CD4-positive, alpha-beta memory T cell (primary cell): ENCODE measurements at regions of chr3 and their contacts with region 1.

Region 1: DNA sequence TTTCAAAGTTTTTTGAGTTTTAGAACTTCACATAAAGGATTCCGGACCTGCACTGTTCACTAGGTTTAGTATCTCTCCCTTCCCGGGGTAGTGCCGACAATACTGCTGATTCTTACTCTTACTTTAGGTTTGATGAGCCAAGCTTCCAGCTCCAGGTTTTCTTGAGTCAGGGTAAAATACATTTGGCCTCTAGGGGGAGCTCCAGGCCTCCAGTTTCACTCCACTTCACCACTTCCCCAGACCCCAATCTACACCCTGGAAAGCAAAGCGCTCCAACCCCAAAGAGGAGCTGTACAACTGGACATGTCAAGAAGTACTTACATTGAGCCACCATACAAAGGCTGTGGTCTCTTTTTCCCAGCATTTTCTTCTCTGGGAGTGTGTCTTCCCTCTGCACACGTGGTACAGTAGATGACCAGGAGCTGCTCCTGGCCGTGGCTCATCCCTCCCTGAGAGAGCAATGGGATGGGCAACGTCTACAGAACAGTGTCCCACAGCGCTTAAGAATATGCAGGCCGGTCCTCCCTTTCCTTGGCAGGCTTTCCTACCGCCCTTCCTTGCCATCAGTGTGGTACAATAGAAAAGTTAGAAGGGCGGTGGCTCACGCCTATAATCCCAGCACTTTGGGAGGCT is 93.9 kb upstream of the CCDC80 start:
- DNase-seq: peak; percentile 63 to 72 (median 69)
- H3K4me3 ChIP-seq: no peak overlapping the region
- H3K4me3 Mint-ChIP-seq: peak overlapping the region in 2 of 8 donors; percentile 3 to 5
- H3K27ac ChIP-seq: no peak overlapping the region
- H3K27ac Mint-ChIP-seq: peak overlapping the region in 5 of 7 donors; percentile 5 to 58 (median 40)
- H3K4me1 ChIP-seq: peaks cover 56% of the 10 kb centered on the region
- H3K4me1 Mint-ChIP-seq: peaks cover 30 to 50% (median 42%) of the 10 kb centered on the region in 4 donors
- H3K27me3 ChIP-seq: no peaks in the 10 kb centered on the region
- H3K27me3 Mint-ChIP-seq: no peaks in the 10 kb centered on the region

Region 2: GRCh38 chr3:112746675-112747280 is 11.9 kb after region 1 on chr3:
- CTCF ChIA-PET with region 1: interaction called, 59 read pairs
- POLR2A ChIA-PET with region 1: interaction called, 10 read pairs
- intact Hi-C with region 1: no loop called
- DNase-seq: no peak
- H3K4me3 ChIP-seq: no peak overlapping the region
- H3K4me3 Mint-ChIP-seq: peak overlapping the region in 1 of 8 donors; percentile 61
- H3K27ac ChIP-seq: no peak overlapping the region
- H3K27ac Mint-ChIP-seq: no peak overlapping the region
- H3K4me1 ChIP-seq: peaks cover 55% of the 10 kb centered on the region
- H3K4me1 Mint-ChIP-seq: peaks cover 17 to 48% (median 28%) of the 10 kb centered on the region in 4 donors
- H3K27me3 ChIP-seq: no peaks in the 10 kb centered on the region
- H3K27me3 Mint-ChIP-seq: no peaks in the 10 kb centered on the region

Region 3: GRCh38 chr3:112773864-112774590 is 39.2 kb after region 1 on chr3:
- CTCF ChIA-PET with region 1: interaction called, 18 read pairs
- POLR2A ChIA-PET with region 1: interaction called, 26 read pairs
- intact Hi-C with region 1: loop called (anchors 2 kb)
- DNase-seq: peak; percentile 48 to 73 (median 62)
- H3K4me3 ChIP-seq: no peak overlapping the region
- H3K4me3 Mint-ChIP-seq: peak overlapping the region; percentile 51 to 79 (median 69)
- H3K27ac ChIP-seq: peak overlapping the region; percentile 18
- H3K27ac Mint-ChIP-seq: peak overlapping the region; percentile 73 to 89 (median 85)
- H3K4me1 ChIP-seq: peaks cover 68% of the 10 kb centered on the region
- H3K4me1 Mint-ChIP-seq: peaks cover 45 to 82% (median 61%) of the 10 kb centered on the region in 4 donors
- H3K27me3 ChIP-seq: no peaks in the 10 kb centered on the region
- H3K27me3 Mint-ChIP-seq: no peaks in the 10 kb centered on the region

Region 4: DNA sequence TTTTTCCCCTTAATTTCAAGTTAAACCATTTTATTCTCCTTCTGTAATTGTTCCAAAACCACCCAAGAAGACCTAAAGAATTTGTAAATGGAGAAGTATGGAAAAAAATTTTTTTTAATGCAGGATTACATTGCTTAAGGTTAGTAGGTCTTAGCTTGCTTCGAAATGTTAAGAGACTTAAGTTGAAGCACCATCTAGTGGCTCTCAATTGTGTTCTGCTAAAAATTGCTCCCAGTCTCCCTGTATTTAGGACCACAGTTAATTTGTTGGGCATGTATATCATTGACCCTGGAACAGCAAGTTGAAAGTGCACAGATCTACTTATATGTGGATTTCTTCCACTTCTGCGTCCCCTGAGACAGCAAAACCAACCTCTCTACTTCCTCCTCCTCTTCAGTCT is 79.4 kb after region 1 on chr3:
- CTCF ChIA-PET with region 1: interaction called, 180 read pairs
- POLR2A ChIA-PET with region 1: interaction called, 13 read pairs
- intact Hi-C with region 1: loop called (anchors 1 kb)
- DNase-seq: peak in 2 of 5 donors; percentile 9 to 13
- H3K4me3 ChIP-seq: no peak overlapping the region
- H3K4me3 Mint-ChIP-seq: peak overlapping the region in 1 of 8 donors; percentile 61
- H3K27ac ChIP-seq: no peak overlapping the region
- H3K27ac Mint-ChIP-seq: peak overlapping the region in 1 of 7 donors; percentile 68
- H3K4me1 ChIP-seq: peaks cover 27% of the 10 kb centered on the region
- H3K4me1 Mint-ChIP-seq: peaks cover 18 to 44% (median 32%) of the 10 kb centered on the region in 4 donors
- H3K27me3 ChIP-seq: no peaks in the 10 kb centered on the region
- H3K27me3 Mint-ChIP-seq: no peaks in the 10 kb centered on the region

Region 5: DNA sequence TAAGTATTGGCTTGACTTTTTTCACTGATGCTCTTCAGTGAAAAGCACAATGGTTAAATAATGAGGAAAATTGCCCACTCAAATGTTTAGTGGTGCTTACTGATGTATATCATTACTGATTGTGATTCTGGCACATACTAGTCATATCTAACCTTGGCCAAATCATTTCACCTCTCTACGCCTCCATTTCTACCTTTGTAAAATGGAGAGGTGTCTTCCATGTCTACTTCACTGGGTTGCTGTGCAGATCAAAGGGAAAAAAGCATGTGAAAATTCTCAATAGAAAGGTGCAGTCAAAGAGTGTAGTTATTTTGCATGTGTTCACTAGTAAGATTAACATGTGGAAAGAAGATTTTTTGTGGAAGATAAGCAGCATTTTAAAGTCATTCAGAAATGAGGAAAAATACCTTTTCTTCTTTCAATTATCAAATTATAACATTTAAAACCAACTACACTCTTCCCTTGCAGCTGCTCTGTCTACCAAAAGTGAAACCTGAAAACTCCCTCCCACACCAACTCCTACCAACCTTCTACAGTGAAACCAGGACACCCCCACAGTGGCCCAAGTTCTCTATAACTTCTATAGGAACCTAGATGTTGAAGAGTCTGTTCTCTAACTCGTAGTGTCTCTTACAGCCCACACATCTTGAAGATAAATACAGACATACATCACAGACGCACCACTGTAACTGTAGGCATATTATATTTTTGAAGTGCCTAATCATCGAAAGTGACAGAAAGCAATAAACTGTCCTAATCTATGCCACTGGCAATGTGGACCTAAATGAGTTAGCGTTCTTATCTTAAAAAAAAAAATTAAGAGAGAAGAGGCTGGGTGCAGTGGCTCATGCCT is 238.7 kb after region 1 on chr3:
- CTCF ChIA-PET with region 1: interaction called, 161 read pairs
- POLR2A ChIA-PET with region 1: interaction called, 35 read pairs
- intact Hi-C with region 1: loop called (anchors 1 kb)
- DNase-seq: peak; percentile 47 to 69 (median 52)
- H3K4me3 ChIP-seq: peak overlapping the region; percentile 64 to 66
- H3K4me3 Mint-ChIP-seq: peak overlapping the region; percentile 88 to 98 (median 94)
- H3K27ac ChIP-seq: peak overlapping the region; percentile 65
- H3K27ac Mint-ChIP-seq: peak overlapping the region; percentile 88 to 98 (median 93)
- H3K4me1 ChIP-seq: peaks cover 65% of the 10 kb centered on the region
- H3K4me1 Mint-ChIP-seq: peaks cover 60 to 95% (median 71%) of the 10 kb centered on the region in 4 donors
- H3K27me3 ChIP-seq: no peaks in the 10 kb centered on the region
- H3K27me3 Mint-ChIP-seq: no peaks in the 10 kb centered on the region

Region 6: GRCh38 chr3:113035387-113035982 is 300.7 kb after region 1 on chr3:
- CTCF ChIA-PET with region 1: interaction called, 6 read pairs
- POLR2A ChIA-PET with region 1: no interaction called
- intact Hi-C with region 1: loop called (anchors 5 kb)
- DNase-seq: peak; percentile 34 to 58 (median 49)
- H3K4me3 ChIP-seq: no peak overlapping the region
- H3K4me3 Mint-ChIP-seq: no peak overlapping the region
- H3K27ac ChIP-seq: no peak overlapping the region
- H3K27ac Mint-ChIP-seq: no peak overlapping the region
- H3K4me1 ChIP-seq: no peaks in the 10 kb centered on the region
- H3K4me1 Mint-ChIP-seq: peaks cover 0 to 5% (median 1%) of the 10 kb centered on the region in 4 donors
- H3K27me3 ChIP-seq: no peaks in the 10 kb centered on the region
- H3K27me3 Mint-ChIP-seq: no peaks in the 10 kb centered on the region